ENCODE measurements at regions of chr17 and their contacts with region 1.

Region 1: DNA sequence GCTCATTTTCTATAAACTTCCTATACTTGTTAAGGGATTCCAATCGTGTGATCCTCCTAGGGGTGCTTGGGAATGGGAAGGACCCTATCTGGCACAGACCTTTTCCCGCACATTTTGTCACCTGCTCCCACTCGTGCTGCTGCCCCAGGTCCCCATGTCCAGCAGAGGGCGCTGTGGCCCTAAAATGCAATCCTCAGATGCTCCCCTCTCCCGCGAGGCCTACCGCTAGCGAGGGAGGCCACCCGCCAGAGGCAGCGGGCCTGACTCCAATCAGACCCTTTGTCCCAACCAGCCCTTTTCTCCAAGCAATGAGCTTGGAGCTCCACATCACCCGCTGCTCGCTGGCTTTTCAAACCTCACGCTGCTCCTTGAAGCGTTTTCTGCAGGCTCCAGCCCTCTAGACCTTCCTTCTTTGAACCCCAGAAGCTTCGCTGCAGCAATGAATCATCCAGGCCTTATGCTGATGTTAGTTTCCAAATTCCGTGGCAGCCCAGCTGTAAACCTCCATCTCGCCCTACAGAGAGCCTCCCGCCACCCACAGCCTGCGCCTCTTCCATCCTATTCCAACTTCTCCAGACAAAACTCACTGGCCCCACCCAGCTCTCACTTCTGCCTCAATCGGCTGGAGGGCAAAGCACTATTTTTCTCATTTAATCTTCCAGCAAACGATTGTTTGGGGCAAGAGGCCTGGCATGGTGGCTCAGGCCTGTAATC is 23.6 kb upstream of the FZD2 start:
- DNase-seq: peak; percentile 92 to 95
- H3K4me3 ChIP-seq: peak overlapping the region in 3 of 4 donors; percentile 6 to 17 (median 12)
- H3K27ac ChIP-seq: peak overlapping the region in 4 of 5 donors; percentile 30 to 68 (median 46)
- H3K4me1 ChIP-seq: peaks cover 6 to 14% (median 8%) of the 10 kb centered on the region in 4 donors
- H3K27me3 ChIP-seq: peaks cover 0 to 7% (median 0%) of the 10 kb centered on the region in 3 donors
- CTCF ChIP-seq: peak in 5 of 7 experiments; percentile 86 to 96 (median 91)
- EP300 ChIP-seq: no peak
- POLR2A ChIP-seq: no peak

Region 2: GRCh38 chr17:44636562-44636961 is 102.9 kb after region 1 on chr17:
- intact Hi-C with region 1: loop called (anchors 5 kb)
- DNase-seq: peak in 1 of 2 donors; percentile 58
- H3K4me3 ChIP-seq: no peak overlapping the region
- H3K27ac ChIP-seq: no peak overlapping the region
- H3K4me1 ChIP-seq: no peaks in the 10 kb centered on the region
- H3K27me3 ChIP-seq: peaks cover 0 to 3% (median 0%) of the 10 kb centered on the region in 3 donors
- CTCF ChIP-seq: peak in 2 of 7 experiments; percentile 41 to 44
- EP300 ChIP-seq: no peak
- POLR2A ChIP-seq: no peak

Measured in stomach (tissue), 19 donors.